ENCODE measurements at regions of chr15 and their contacts with region 1.

Region 1: GRCh38 chr15:69760890-69761568 is 308.4 kb downstream of the RPLP1 start:
- DNase-seq: peak; percentile 34 to 88 (median 81)
- ATAC-seq: peak; percentile 84
- H3K4me3 ChIP-seq: peak overlapping the region; percentile 34
- H3K4me3 Mint-ChIP-seq: peak overlapping the region; percentile 51 to 86 (median 67)
- H3K27ac ChIP-seq: no peak overlapping the region
- H3K27ac Mint-ChIP-seq: peak overlapping the region; percentile 48 to 95 (median 88)
- H3K4me1 ChIP-seq: peaks cover 57 to 61% of the 10 kb centered on the region in 2 donors
- H3K4me1 Mint-ChIP-seq: peaks cover 52 to 79% (median 70%) of the 10 kb centered on the region in 7 donors
- H3K27me3 ChIP-seq: no peaks in the 10 kb centered on the region
- H3K27me3 Mint-ChIP-seq: peaks cover 0 to 25% (median 7%) of the 10 kb centered on the region in 5 donors

Region 2: DNA sequence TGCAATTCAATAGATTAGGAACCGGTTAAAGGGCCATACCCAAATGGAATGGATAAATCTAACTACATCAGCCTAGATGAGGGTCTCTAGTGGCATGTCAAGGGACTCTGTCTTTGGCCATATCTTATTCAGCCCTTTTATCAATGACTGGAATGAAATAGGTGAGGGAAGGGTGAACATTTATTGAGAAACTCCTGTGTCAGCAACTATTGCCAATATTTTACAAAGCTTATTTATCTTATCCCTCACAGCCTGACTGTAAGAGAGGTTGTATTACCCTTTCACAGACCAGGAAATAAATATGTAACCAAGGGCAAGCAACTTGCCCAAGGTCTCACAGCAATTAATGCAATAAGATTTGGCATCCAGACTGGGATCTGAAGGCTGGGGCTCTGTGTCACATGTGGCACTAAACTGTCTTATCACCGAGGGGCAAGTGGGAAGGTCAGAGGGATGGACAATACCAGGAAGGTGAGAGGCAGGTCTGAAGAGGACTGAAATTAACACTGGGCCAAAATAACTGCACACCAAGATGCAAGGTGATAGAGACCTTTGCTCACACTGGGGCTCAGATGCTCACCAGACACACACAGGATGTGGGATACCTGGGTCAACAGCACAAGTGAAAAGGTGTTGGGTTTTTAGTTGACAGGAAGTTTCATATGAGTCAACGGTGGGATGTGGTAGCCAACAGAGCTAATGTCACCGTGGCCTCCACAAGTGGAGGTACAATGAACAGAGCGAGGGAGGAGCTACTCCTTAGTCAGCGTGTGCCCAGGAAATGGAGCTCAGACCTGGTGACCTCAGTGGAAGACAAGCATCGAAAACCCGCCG is 47.1 kb before region 1 on chr15:
- CTCF ChIA-PET with region 1: interaction called, 3 read pairs
- POLR2A ChIA-PET with region 1: interaction called, 10 read pairs
- intact Hi-C with region 1: loop called (anchors 1 kb)
- DNase-seq: peak in 8 of 9 donors; percentile 60 to 80 (median 70)
- ATAC-seq: peak; percentile 88
- H3K4me3 ChIP-seq: no peak overlapping the region
- H3K4me3 Mint-ChIP-seq: peak overlapping the region; percentile 52 to 80 (median 72)
- H3K27ac ChIP-seq: no peak overlapping the region
- H3K27ac Mint-ChIP-seq: peak overlapping the region; percentile 71 to 90 (median 78)
- H3K4me1 ChIP-seq: peaks cover 32 to 50% of the 10 kb centered on the region in 2 donors
- H3K4me1 Mint-ChIP-seq: peaks cover 31 to 63% (median 54%) of the 10 kb centered on the region in 7 donors
- H3K27me3 ChIP-seq: no peaks in the 10 kb centered on the region
- H3K27me3 Mint-ChIP-seq: peaks cover 0 to 22% (median 0%) of the 10 kb centered on the region in 5 donors

Region 3: GRCh38 chr15:69729161-69729748 is 31.8 kb before region 1 on chr15:
- CTCF ChIA-PET with region 1: interaction called, 5 read pairs
- POLR2A ChIA-PET with region 1: interaction called, 4 read pairs
- intact Hi-C with region 1: loop called in 1 of 2 experiments (anchors 1 kb)
- DNase-seq: peak; percentile 38 to 79 (median 61)
- ATAC-seq: peak; percentile 53
- H3K4me3 ChIP-seq: no peak overlapping the region
- H3K4me3 Mint-ChIP-seq: no peak overlapping the region
- H3K27ac ChIP-seq: no peak overlapping the region
- H3K27ac Mint-ChIP-seq: peak overlapping the region in 3 of 9 donors; percentile 5 to 22 (median 19)
- H3K4me1 ChIP-seq: peaks cover 0 to 12% of the 10 kb centered on the region in 2 donors
- H3K4me1 Mint-ChIP-seq: peaks cover 13 to 64% (median 23%) of the 10 kb centered on the region in 7 donors
- H3K27me3 ChIP-seq: no peaks in the 10 kb centered on the region
- H3K27me3 Mint-ChIP-seq: peaks cover 0 to 30% (median 0%) of the 10 kb centered on the region in 5 donors

Region 4: DNA sequence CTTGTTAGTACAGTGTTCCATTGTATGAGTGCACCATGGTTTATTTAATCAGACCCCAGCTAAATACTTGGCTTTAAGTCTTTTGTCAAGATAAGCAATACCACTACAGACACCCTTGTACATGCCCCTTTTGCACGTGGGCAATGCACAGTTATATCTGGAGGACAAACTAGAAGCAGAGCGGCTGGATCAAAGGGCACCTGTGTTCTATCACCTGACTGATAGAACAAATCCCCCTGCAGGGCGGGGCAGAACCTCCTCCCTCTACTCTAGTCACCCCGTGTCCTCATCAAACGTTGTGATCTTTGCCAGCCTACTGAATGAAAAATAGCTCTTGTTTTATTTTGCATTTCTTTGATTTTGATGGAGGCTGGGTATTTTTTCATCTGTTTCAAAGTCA is 21.8 kb after region 1 on chr15:
- CTCF ChIA-PET with region 1: no interaction called
- POLR2A ChIA-PET with region 1: interaction called, 3 read pairs
- intact Hi-C with region 1: loop called in 1 of 2 experiments (anchors 2 kb)
- DNase-seq: peak in 7 of 9 donors; percentile 30 to 63 (median 44)
- ATAC-seq: peak; percentile 77
- H3K4me3 ChIP-seq: no peak overlapping the region
- H3K4me3 Mint-ChIP-seq: peak overlapping the region in 6 of 10 donors; percentile 17 to 60 (median 27)
- H3K27ac ChIP-seq: no peak overlapping the region
- H3K27ac Mint-ChIP-seq: no peak overlapping the region
- H3K4me1 ChIP-seq: peaks cover 0 to 23% of the 10 kb centered on the region in 2 donors
- H3K4me1 Mint-ChIP-seq: peaks cover 16 to 40% (median 26%) of the 10 kb centered on the region in 7 donors
- H3K27me3 ChIP-seq: no peaks in the 10 kb centered on the region
- H3K27me3 Mint-ChIP-seq: peaks cover 5 to 63% (median 17%) of the 10 kb centered on the region in 5 donors

Region 5: GRCh38 chr15:69903470-69904469 is 142.7 kb after region 1 on chr15:
- CTCF ChIA-PET with region 1: no interaction called
- POLR2A ChIA-PET with region 1: no interaction called
- intact Hi-C with region 1: no loop called
- DNase-seq: no peak
- ATAC-seq: no peak
- H3K4me3 ChIP-seq: no peak overlapping the region
- H3K4me3 Mint-ChIP-seq: no peak overlapping the region
- H3K27ac ChIP-seq: no peak overlapping the region
- H3K27ac Mint-ChIP-seq: no peak overlapping the region
- H3K4me1 ChIP-seq: no peaks in the 10 kb centered on the region
- H3K4me1 Mint-ChIP-seq: peaks cover 0 to under 1% (median 0%) of the 10 kb centered on the region in 7 donors
- H3K27me3 ChIP-seq: no peaks in the 10 kb centered on the region
- H3K27me3 Mint-ChIP-seq: peaks cover 0 to 5% (median 3%) of the 10 kb centered on the region in 5 donors

Region 6: GRCh38 chr15:70559265-70560239 is 798.5 kb after region 1 on chr15:
- CTCF ChIA-PET with region 1: no interaction called
- POLR2A ChIA-PET with region 1: no interaction called
- intact Hi-C with region 1: loop called in 1 of 2 experiments (anchors 2 kb)
- DNase-seq: peak; percentile 35 to 83 (median 80)
- ATAC-seq: peak; percentile 88
- H3K4me3 ChIP-seq: peak overlapping the region; percentile 69
- H3K4me3 Mint-ChIP-seq: peak overlapping the region in 1 of 10 donors; percentile 11
- H3K27ac ChIP-seq: peak overlapping the region; percentile 62
- H3K27ac Mint-ChIP-seq: no peak overlapping the region
- H3K4me1 ChIP-seq: peaks cover 31 to 66% of the 10 kb centered on the region in 2 donors
- H3K4me1 Mint-ChIP-seq: peaks cover 4 to 24% (median 14%) of the 10 kb centered on the region in 7 donors
- H3K27me3 ChIP-seq: no peaks in the 10 kb centered on the region
- H3K27me3 Mint-ChIP-seq: peaks cover 0 to 29% (median 0%) of the 10 kb centered on the region in 5 donors

Region 7: GRCh38 chr15:70947351-70948335 is 1186.6 kb after region 1 on chr15:
- CTCF ChIA-PET with region 1: no interaction called
- POLR2A ChIA-PET with region 1: no interaction called
- intact Hi-C with region 1: no loop called
- DNase-seq: no peak
- ATAC-seq: no peak
- H3K4me3 ChIP-seq: no peak overlapping the region
- H3K4me3 Mint-ChIP-seq: no peak overlapping the region
- H3K27ac ChIP-seq: no peak overlapping the region
- H3K27ac Mint-ChIP-seq: no peak overlapping the region
- H3K4me1 ChIP-seq: no peaks in the 10 kb centered on the region
- H3K4me1 Mint-ChIP-seq: no peaks in the 10 kb centered on the region
- H3K27me3 ChIP-seq: no peaks in the 10 kb centered on the region
- H3K27me3 Mint-ChIP-seq: peaks cover 17 to 55% (median 33%) of the 10 kb centered on the region in 5 donors

Measured in naive thymus-derived CD4-positive, alpha-beta T cell (primary cell).